IMR-90 (cell line): ENCODE measurements at regions of chr3 and their contacts with region 1.

Region 1: DNA sequence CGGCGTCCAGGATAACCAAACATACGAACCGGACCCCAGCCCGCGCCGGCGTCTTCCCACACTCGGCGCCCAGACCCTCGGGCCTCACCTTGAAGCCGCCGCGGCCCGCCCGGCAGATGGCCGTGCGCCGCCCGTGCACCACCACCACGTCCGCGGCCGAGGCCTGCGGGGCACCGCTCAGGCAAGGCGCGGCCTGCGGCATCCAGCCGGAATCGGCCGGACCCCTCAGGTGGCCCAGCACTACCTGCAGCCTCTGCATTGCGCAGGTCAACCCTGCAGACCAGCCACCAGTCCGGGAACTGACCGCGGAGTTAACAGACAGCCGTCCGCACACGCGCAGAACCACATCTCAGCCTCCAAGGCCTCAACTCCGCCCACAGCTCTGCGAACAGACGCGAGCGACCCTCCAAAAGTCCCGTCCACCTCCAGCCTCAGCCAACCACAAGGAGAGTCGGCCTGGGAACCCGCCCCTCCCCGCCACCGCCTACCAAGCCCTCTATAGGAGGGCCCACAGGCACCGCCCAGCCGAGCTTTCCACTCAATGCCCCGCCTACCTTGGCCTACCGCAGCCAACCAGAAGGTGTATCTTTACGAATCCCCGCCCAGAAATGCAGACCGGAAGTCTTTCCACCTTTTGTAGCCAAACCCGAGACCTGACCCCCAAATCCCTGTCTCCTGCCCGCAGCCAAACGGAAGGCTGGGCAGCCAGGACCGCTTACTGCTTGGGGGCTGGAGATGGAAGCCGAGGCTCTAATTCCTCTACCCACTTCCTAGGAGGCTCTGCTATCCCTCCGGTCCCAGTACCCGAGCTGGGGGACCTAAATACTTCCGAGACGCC is at the start of gene ACAA1:
- DNase-seq: peak; percentile 98
- ATAC-seq: peak; percentile 95
- H3K4me3 ChIP-seq: peak within 1 kb of the TSS; percentile 65
- H3K27ac ChIP-seq: peak within 1 kb of the TSS; percentile 78
- H3K4me1 ChIP-seq: peaks cover 13% of the 10 kb centered on the region
- H3K27me3 ChIP-seq: no peaks in the 10 kb centered on the region
- CTCF ChIP-seq: no peak
- POLR2A ChIP-seq: peak; percentile 84
- RAD21 ChIP-seq: peak; percentile 14; the same call in 1 of the 2 replicates
- total RNA-seq, gene ACAA1: 19.4 and 30.8 TPM in 2 replicates

Region 2: GRCh38 chr3:38164966-38165680 is 28.1 kb after region 1 on chr3 and contains the start of gene OXSR1:
- CTCF ChIA-PET with region 1: interaction called, 3 read pairs
- POLR2A ChIA-PET with region 1: interaction called, 10 read pairs
- dilution Hi-C with region 1: no loop called
- in situ Hi-C with region 1: no loop called
- intact Hi-C with region 1: no loop called
- DNase-seq: peak; percentile 100
- ATAC-seq: peak; percentile 91
- H3K4me3 ChIP-seq: peak within 1 kb of the TSS; percentile 57
- H3K27ac ChIP-seq: peak within 1 kb of the TSS; percentile 98
- H3K4me1 ChIP-seq: peaks cover 3% of the 10 kb centered on the region; the same call in 1 of the 2 replicates
- H3K27me3 ChIP-seq: no peaks in the 10 kb centered on the region
- CTCF ChIP-seq: no peak
- POLR2A ChIP-seq: peak; percentile 55; the same call in 1 of the 2 replicates
- RAD21 ChIP-seq: no peak; the same call in 1 of the 2 replicates
- total RNA-seq, gene OXSR1: 37.6 and 50.5 TPM in 2 replicates

Region 3: GRCh38 chr3:38227989-38228388 is 91.0 kb after region 1 on chr3:
- CTCF ChIA-PET with region 1: no interaction called
- POLR2A ChIA-PET with region 1: no interaction called
- dilution Hi-C with region 1: no loop called
- in situ Hi-C with region 1: no loop called
- intact Hi-C with region 1: loop called (anchors 1 kb)
- DNase-seq: peak; percentile 63
- ATAC-seq: peak; percentile 78
- H3K4me3 ChIP-seq: no peak overlapping the region
- H3K27ac ChIP-seq: peak overlapping the region; percentile 60; the same call in 1 of the 2 replicates
- H3K4me1 ChIP-seq: peaks cover 4% of the 10 kb centered on the region
- H3K27me3 ChIP-seq: no peaks in the 10 kb centered on the region
- CTCF ChIP-seq: no peak
- POLR2A ChIP-seq: no peak
- RAD21 ChIP-seq: no peak

Region 4: GRCh38 chr3:38247366-38248035 is 110.5 kb after region 1 on chr3:
- CTCF ChIA-PET with region 1: no interaction called
- POLR2A ChIA-PET with region 1: no interaction called
- dilution Hi-C with region 1: no loop called
- in situ Hi-C with region 1: no loop called
- intact Hi-C with region 1: loop called (anchors 2 kb)
- DNase-seq: peak; percentile 93
- ATAC-seq: peak; percentile 98
- H3K4me3 ChIP-seq: no peak overlapping the region
- H3K27ac ChIP-seq: no peak overlapping the region
- H3K4me1 ChIP-seq: no peaks in the 10 kb centered on the region; the same call in 1 of the 2 replicates
- H3K27me3 ChIP-seq: no peaks in the 10 kb centered on the region
- CTCF ChIP-seq: peak; percentile 49
- POLR2A ChIP-seq: no peak
- RAD21 ChIP-seq: peak; percentile 61

Region 5: DNA sequence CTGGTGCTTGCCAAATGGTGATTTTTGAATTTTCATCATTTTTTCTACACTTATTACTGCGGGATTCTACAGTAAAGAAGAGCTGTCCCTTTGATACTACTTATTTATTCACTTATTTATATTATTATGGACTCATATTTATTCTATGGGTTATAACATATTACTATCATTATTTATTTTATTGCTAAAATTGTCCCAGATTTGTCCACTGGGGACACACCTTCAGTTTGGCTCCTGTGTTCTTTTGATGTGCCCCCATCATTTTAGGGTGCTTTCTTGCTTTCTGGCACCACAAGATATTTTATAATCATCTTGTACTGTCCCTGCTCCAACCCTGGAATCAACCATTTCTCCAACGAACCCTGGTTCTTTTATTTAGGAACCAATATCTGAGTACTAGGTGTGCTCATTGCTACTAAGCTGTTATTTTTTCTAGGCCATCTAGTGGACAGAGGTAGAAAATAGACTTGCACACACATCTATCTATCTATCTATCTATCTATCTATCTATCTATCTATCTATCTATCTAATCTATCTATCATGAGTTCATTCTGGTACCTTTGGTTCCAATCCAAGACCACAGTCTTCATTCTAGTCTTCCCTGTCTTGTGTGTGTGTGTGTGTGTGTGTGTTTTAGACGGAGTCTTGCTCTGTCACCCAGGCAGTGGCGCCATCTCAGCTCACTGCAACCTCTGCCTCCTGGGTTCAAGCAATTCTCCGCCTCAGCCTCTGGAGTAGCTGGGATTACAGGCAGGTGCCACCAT is 161.1 kb after region 1 on chr3:
- CTCF ChIA-PET with region 1: interaction called, 5 read pairs
- POLR2A ChIA-PET with region 1: no interaction called
- dilution Hi-C with region 1: no loop called
- in situ Hi-C with region 1: no loop called
- intact Hi-C with region 1: loop called (anchors 2 kb)
- DNase-seq: peak; percentile 29
- ATAC-seq: peak; percentile 80
- H3K4me3 ChIP-seq: no peak overlapping the region
- H3K27ac ChIP-seq: no peak overlapping the region
- H3K4me1 ChIP-seq: no peaks in the 10 kb centered on the region
- H3K27me3 ChIP-seq: peaks cover under 1% of the 10 kb centered on the region; the same call in 1 of the 2 replicates
- CTCF ChIP-seq: peak; percentile 41
- POLR2A ChIP-seq: no peak
- RAD21 ChIP-seq: peak; percentile 24; the same call in 1 of the 2 replicates

Region 6: DNA sequence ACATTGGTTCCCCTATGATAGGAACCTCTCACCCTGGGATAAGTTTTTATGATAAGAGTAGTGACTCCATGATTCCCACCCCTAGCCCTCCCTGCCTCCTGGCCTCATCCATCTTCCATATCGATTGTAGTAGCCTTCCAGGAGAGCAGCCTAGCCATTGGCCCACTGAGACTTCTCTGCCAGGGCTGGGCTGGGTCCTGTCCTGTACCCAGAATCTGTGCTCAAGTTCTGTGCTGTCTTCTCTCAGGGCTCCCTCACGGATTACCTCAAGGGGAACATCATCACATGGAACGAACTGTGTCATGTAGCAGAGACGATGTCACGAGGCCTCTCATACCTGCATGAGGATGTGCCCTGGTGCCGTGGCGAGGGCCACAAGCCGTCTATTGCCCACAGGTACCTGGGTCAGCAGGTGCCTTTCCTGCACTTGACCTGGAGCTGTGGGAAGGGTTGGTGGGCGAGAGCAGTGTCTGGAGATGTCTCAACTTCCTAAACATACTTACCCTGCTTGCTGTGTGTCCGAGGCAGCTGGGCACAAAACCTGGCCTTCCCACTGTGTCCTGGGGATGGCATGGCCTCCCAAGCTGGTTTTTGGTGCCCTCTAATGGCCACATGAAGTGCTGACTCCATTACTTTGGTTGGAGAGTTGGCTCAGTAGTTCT is 342.6 kb after region 1 on chr3:
- CTCF ChIA-PET with region 1: no interaction called
- POLR2A ChIA-PET with region 1: no interaction called
- dilution Hi-C with region 1: no loop called
- in situ Hi-C with region 1: loop called (anchors 10 kb)
- intact Hi-C with region 1: loop called (anchors 1 kb)
- DNase-seq: peak; percentile 62
- ATAC-seq: peak; percentile 99
- H3K4me3 ChIP-seq: no peak overlapping the region
- H3K27ac ChIP-seq: no peak overlapping the region
- H3K4me1 ChIP-seq: no peaks in the 10 kb centered on the region
- H3K27me3 ChIP-seq: no peaks in the 10 kb centered on the region
- CTCF ChIP-seq: peak; percentile 92
- POLR2A ChIP-seq: peak; percentile 43; the same call in 1 of the 2 replicates
- RAD21 ChIP-seq: peak; percentile 95

Region 7: GRCh38 chr3:38878646-38879045 is 741.6 kb after region 1 on chr3:
- CTCF ChIA-PET with region 1: no interaction called
- POLR2A ChIA-PET with region 1: no interaction called
- dilution Hi-C with region 1: no loop called
- in situ Hi-C with region 1: no loop called
- intact Hi-C with region 1: no loop called
- DNase-seq: no peak
- ATAC-seq: no peak
- H3K4me3 ChIP-seq: no peak overlapping the region
- H3K27ac ChIP-seq: no peak overlapping the region
- H3K4me1 ChIP-seq: no peaks in the 10 kb centered on the region
- H3K27me3 ChIP-seq: peaks cover 3% of the 10 kb centered on the region
- CTCF ChIP-seq: no peak
- POLR2A ChIP-seq: no peak
- RAD21 ChIP-seq: no peak

Region 8: GRCh38 chr3:38985581-38985980 is 848.6 kb after region 1 on chr3:
- CTCF ChIA-PET with region 1: no interaction called
- POLR2A ChIA-PET with region 1: no interaction called
- dilution Hi-C with region 1: no loop called
- in situ Hi-C with region 1: no loop called
- intact Hi-C with region 1: no loop called
- DNase-seq: peak; percentile 91
- ATAC-seq: peak; percentile 84
- H3K4me3 ChIP-seq: no peak overlapping the region
- H3K27ac ChIP-seq: peak overlapping the region; percentile 67
- H3K4me1 ChIP-seq: peaks cover 22% of the 10 kb centered on the region
- H3K27me3 ChIP-seq: no peaks in the 10 kb centered on the region
- CTCF ChIP-seq: no peak
- POLR2A ChIP-seq: no peak
- RAD21 ChIP-seq: no peak